Endothelial cell of umbilical vein (primary cell): ENCODE measurements at regions of chr3 and their contacts with region 1.

Region 1: GRCh38 chr3:79497447-79498111 is 270.2 kb downstream of the ROBO1 start:
- DNase-seq: peak; percentile 33
- H3K4me3 ChIP-seq: no peak overlapping the region
- H3K27ac ChIP-seq: no peak overlapping the region
- H3K4me1 ChIP-seq: no peaks in the 10 kb centered on the region
- H3K27me3 ChIP-seq: no peaks in the 10 kb centered on the region
- CTCF ChIP-seq: peak; percentile 25 to 35
- POLR2A ChIP-seq: no peak

Region 2: GRCh38 chr3:78659386-78659987 is 838.1 kb before region 1 on chr3:
- CTCF ChIA-PET with region 1: no interaction called
- POLR2A ChIA-PET with region 1: no interaction called
- dilution Hi-C with region 1: no loop called
- intact Hi-C with region 1: loop called (anchors 2 kb)
- DNase-seq: peak; percentile 52
- H3K4me3 ChIP-seq: no peak overlapping the region
- H3K27ac ChIP-seq: no peak overlapping the region
- H3K4me1 ChIP-seq: no peaks in the 10 kb centered on the region
- H3K27me3 ChIP-seq: no peaks in the 10 kb centered on the region
- CTCF ChIP-seq: peak; percentile 20 to 29
- POLR2A ChIP-seq: no peak

Region 3: DNA sequence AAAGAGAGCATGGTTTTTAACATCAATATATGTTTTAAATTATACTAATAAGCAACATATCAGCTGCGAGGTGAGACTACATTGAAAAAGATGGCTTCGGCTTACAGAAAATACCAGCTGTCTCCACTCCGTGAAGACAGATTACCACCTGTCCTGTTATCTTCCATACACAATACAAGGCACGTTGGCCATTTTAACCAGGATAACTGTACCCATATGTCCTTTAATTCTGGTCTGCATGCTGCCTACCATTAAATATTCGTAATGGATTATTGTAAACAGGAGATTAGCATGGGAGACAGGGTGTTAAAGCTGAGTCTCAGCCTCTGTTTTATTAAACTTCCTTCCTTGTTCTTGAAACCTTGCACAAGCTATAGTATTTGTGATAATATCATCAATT is 585.3 kb before region 1 on chr3:
- CTCF ChIA-PET with region 1: no interaction called
- POLR2A ChIA-PET with region 1: no interaction called
- dilution Hi-C with region 1: no loop called
- intact Hi-C with region 1: no loop called
- DNase-seq: no peak
- H3K4me3 ChIP-seq: no peak overlapping the region
- H3K27ac ChIP-seq: no peak overlapping the region
- H3K4me1 ChIP-seq: no peaks in the 10 kb centered on the region
- H3K27me3 ChIP-seq: no peaks in the 10 kb centered on the region
- CTCF ChIP-seq: no peak
- POLR2A ChIP-seq: no peak

Region 4: DNA sequence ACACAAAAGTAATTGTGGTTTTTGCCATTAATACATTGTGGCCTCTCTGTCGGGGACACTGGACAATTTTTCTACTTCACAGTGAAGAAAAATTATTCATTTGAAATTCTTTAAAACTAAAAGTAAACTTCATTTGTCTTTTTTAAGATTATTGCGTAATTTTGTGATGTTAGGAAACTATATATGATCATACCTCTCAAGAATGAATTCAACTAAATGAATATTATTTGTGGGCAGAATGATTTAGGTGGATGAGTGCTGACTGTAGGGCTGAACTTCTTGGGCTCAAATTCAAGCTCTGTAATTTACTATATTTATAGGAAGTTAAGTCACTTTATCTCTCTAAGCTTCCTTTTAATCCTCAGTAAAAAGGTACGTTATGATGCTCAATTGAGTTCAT is 170.9 kb before region 1 on chr3:
- CTCF ChIA-PET with region 1: no interaction called
- POLR2A ChIA-PET with region 1: no interaction called
- dilution Hi-C with region 1: no loop called
- intact Hi-C with region 1: no loop called
- DNase-seq: no peak
- H3K4me3 ChIP-seq: no peak overlapping the region
- H3K27ac ChIP-seq: no peak overlapping the region
- H3K4me1 ChIP-seq: no peaks in the 10 kb centered on the region
- H3K27me3 ChIP-seq: no peaks in the 10 kb centered on the region
- CTCF ChIP-seq: no peak
- POLR2A ChIP-seq: no peak

Region 5: DNA sequence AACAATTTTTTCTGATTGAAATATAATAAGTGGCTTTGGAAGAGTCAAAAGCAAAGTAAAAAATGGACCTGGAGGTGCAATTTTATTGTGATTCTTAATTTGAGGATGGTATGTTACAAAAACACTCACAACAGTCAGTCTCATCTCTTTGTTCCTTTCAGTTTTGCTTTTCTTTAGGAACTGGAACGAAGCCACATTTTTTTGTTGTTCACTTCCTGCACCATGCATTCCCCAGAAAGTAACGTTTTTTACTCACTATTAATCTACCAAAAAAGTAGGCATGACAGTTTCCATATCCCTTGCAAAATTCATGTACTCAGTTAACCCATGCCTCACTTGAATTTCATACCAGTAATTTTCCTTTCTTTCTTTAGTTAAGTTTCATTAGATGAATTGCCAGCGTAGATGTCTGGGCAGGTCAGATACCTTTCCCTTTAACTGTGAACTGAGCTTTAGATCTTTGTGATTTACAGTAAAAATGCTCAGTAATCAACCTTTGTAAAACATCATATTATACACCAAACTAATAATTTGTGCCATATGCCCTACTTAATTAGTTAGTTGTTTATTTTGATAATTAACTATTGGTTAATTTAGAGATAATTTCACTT is 114.1 kb before region 1 on chr3:
- CTCF ChIA-PET with region 1: no interaction called
- POLR2A ChIA-PET with region 1: no interaction called
- dilution Hi-C with region 1: no loop called
- intact Hi-C with region 1: loop called (anchors 5 kb)
- DNase-seq: peak; percentile 32
- H3K4me3 ChIP-seq: peak overlapping the region in 1 of 3 experiments; percentile 46
- H3K27ac ChIP-seq: no peak overlapping the region
- H3K4me1 ChIP-seq: no peaks in the 10 kb centered on the region
- H3K27me3 ChIP-seq: no peaks in the 10 kb centered on the region
- CTCF ChIP-seq: no peak
- POLR2A ChIP-seq: no peak

Region 6: GRCh38 chr3:79672075-79672474 is 174.5 kb after region 1 on chr3:
- CTCF ChIA-PET with region 1: no interaction called
- POLR2A ChIA-PET with region 1: no interaction called
- dilution Hi-C with region 1: no loop called
- intact Hi-C with region 1: no loop called
- DNase-seq: no peak
- H3K4me3 ChIP-seq: no peak overlapping the region
- H3K27ac ChIP-seq: no peak overlapping the region
- H3K4me1 ChIP-seq: no peaks in the 10 kb centered on the region
- H3K27me3 ChIP-seq: no peaks in the 10 kb centered on the region
- CTCF ChIP-seq: no peak
- POLR2A ChIP-seq: no peak

Region 7: DNA sequence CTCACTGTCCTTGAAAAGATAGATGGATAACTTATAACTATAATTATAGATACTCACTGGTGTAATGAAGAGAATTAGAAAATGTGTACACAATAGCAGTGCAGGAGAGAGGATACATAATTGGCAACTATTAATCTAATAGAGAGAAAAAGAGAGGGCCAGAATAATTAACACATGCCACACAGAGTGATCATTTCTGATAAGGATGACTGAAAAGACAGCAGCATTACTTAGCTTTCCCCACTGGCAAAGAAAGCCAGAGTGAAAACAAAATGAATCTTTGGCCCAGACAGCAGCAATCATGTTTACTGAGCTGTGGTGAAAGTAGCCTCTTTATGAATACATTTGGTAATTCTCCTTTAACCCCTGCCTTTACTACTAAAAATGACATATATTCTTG is 763.5 kb after region 1 on chr3:
- CTCF ChIA-PET with region 1: no interaction called
- POLR2A ChIA-PET with region 1: no interaction called
- dilution Hi-C with region 1: no loop called
- intact Hi-C with region 1: no loop called
- DNase-seq: no peak
- H3K4me3 ChIP-seq: no peak overlapping the region
- H3K27ac ChIP-seq: no peak overlapping the region
- H3K4me1 ChIP-seq: no peaks in the 10 kb centered on the region
- H3K27me3 ChIP-seq: no peaks in the 10 kb centered on the region
- CTCF ChIP-seq: no peak
- POLR2A ChIP-seq: no peak